Activated naive CD4-positive, alpha-beta T cell treated with anti-CD3 and anti-CD28 coated beads for 36 hours (primary cell): ENCODE measurements at regions of chr9 and their contacts with region 1.

Region 1: GRCh38 chr9:87535817-87536539 is 38.3 kb downstream of the DAPK1 start:
- DNase-seq: peak; percentile 53
- H3K4me3 Mint-ChIP-seq: no peak overlapping the region
- H3K27ac Mint-ChIP-seq: peak overlapping the region; percentile 71
- H3K4me1 Mint-ChIP-seq: peaks cover 10% of the 10 kb centered on the region
- H3K27me3 Mint-ChIP-seq: no peaks in the 10 kb centered on the region

Region 2: GRCh38 chr9:87375397-87376073 is 160.4 kb before region 1 on chr9:
- CTCF ChIA-PET with region 1: no interaction called
- intact Hi-C with region 1: loop called (anchors 1 kb)
- DNase-seq: no peak
- H3K4me3 Mint-ChIP-seq: no peak overlapping the region
- H3K27ac Mint-ChIP-seq: no peak overlapping the region
- H3K4me1 Mint-ChIP-seq: peaks cover 8% of the 10 kb centered on the region
- H3K27me3 Mint-ChIP-seq: peaks cover 17% of the 10 kb centered on the region